Sigmoid colon (tissue), 7 donors: ENCODE measurements at regions of chr20 and their contacts with region 1.

Region 1: DNA sequence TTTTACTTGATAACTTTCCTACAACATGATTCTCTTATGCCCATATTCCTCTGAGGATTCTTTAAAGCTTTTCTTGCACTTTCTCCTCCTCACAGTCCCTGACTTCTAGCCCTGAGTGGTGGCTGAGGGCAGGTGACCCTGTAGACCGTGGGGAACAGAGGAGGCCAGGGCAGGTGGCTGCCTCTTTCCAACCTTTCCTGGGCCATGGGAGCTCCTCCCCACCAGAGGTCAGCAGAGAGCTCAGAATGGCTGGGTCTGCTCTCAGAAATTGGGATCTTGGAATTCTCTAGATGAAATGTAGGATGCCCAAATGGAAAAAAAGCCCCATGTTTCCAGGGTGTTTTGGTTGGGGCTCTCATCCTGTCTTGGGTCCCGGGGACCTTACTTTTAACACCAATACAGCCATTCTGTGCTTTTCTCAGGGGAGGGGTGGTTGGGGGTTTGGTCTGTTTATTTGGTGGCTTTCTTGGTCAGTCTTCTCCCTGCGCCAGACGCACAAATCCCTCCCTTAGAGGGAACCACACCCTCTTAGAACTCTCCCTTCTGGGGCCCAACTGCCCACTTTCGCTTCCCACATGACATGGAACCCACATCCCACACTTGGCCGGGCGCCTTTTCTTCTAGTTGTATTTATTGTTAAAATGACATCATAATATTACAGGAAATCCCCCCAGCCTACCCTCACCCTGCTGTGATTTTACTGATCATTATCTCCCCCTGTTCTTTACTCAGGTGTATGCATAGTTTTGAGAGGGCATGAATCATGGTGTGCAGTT is 17.9 kb downstream of the GNAS start:
- DNase-seq: peak; percentile 84
- H3K4me3 ChIP-seq: no peak overlapping the region
- H3K27ac ChIP-seq: no peak overlapping the region
- H3K4me1 ChIP-seq: no peaks in the 10 kb centered on the region
- H3K27me3 ChIP-seq: no peaks in the 10 kb centered on the region
- CTCF ChIP-seq: peak; percentile 71 to 88 (median 83)
- EP300 ChIP-seq: no peak
- POLR2A ChIP-seq: no peak

Region 2: GRCh38 chr20:59082077-59082740 is 211.8 kb after region 1 on chr20:
- intact Hi-C with region 1: loop called (anchors 5 kb)
- DNase-seq: no peak
- H3K4me3 ChIP-seq: no peak overlapping the region
- H3K27ac ChIP-seq: no peak overlapping the region
- H3K4me1 ChIP-seq: peaks cover 0 to 4% (median 2%) of the 10 kb centered on the region in 4 donors
- H3K27me3 ChIP-seq: peaks cover 0 to 4% (median 0%) of the 10 kb centered on the region in 3 donors
- CTCF ChIP-seq: peak in 1 of 4 experiments; percentile 11
- EP300 ChIP-seq: no peak
- POLR2A ChIP-seq: no peak

Region 3: DNA sequence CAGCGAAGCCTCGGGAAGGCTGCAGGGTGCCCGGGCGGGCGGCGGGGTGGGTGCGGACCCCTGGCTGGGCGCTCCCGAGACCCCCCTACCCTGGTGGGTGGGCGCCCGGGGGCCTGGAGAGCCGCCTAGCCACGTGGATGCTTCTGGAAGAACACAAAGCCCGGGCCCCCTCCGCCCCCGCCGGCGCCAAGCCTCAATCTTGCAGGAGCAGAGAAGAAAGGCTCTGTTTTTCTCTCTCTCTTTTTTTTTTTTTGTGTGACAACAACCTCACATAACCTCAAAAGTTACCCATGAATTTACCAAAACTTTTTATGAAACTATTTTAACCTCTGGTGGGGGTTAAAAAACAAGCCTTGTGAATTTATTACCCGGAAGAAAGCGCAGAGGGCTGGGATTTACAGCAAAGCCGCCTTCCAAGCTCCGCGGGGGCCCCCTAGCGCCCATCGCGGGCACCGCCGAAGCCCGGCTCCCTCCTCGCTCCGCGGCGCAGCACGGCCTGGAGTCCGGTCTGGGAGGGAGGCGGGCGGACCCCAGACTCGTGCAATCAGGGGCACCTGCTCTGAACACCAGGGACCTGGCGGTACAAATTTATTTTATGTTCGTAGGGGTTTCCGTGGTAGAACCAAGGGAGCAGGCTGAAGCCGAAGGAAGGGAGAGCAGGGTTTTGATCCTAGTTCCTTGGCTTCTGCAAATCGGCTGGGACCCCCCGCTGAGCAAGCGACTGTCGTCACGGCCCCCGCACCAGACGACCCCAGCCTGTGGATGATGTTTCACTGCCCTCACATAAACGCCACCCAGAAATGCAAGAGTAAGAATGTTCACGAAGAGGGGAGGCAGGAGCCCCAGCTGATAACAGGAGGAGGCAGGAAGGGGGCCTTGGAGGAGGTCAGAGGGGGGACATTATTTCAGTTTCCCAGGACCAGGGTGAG is 352.1 kb after region 1 on chr20:
- intact Hi-C with region 1: loop called (anchors 1 kb)
- DNase-seq: peak; percentile 86
- H3K4me3 ChIP-seq: peak overlapping the region; percentile 45 to 69 (median 58)
- H3K27ac ChIP-seq: peak overlapping the region; percentile 38 to 65 (median 48)
- H3K4me1 ChIP-seq: peaks cover 0 to 24% (median 9%) of the 10 kb centered on the region in 4 donors
- H3K27me3 ChIP-seq: peaks cover 0 to 28% (median 4%) of the 10 kb centered on the region in 3 donors
- CTCF ChIP-seq: peak; percentile 55 to 93 (median 77)
- EP300 ChIP-seq: no peak
- POLR2A ChIP-seq: no peak

Region 4: GRCh38 chr20:59403261-59403961 is 533.0 kb after region 1 on chr20:
- intact Hi-C with region 1: loop called (anchors 2 kb)
- DNase-seq: no peak
- H3K4me3 ChIP-seq: peak overlapping the region in 2 of 4 donors; percentile 4 to 8
- H3K27ac ChIP-seq: no peak overlapping the region
- H3K4me1 ChIP-seq: peaks cover 0 to 16% (median 13%) of the 10 kb centered on the region in 4 donors
- H3K27me3 ChIP-seq: peaks cover 8 to 83% (median 29%) of the 10 kb centered on the region in 3 donors
- CTCF ChIP-seq: peak; percentile 52 to 85 (median 84)
- EP300 ChIP-seq: no peak
- POLR2A ChIP-seq: no peak

Region 5: DNA sequence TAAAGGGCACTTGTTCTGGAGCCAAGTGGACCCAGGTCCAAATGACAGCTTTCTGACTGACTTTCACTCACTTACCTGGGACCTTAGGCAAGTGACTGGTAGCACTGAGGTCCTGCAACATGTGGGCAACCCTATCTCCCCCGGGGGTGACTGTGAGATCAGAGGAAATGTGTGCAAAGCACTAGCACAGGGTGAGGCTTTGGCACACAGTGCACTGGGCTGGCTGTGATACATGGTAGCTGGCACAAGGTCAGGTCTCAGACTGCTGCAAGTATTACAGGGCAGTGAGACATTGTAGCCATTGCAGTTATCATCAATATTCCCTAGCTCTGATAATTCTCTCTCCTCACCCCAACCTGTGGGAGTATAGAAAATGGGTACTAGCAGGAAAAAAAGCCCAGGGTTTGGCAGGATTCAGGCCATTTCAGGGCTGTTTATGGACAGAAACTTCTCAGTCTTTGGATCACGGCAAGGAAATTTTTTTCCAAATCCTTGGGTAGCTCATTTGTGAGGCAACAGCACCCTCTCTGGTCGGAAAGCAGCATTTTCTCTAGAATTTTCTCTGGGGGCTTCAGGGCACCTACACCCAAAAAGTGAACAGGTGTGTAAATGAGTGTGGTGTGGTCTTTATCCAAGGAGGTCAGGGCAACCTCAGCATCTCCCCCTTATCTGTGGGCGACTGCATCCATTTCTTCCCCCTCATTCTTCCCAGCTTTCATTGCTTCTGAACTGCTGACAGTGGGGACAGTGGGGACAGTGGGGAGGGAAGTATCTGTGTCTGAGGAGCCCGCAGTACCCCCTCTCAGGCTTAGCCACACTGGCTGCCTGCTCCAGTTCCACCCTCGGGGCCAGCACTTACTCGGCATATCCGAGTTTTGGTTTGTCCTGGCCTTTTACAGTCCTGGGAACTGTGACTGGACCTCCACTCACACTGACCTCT is 585.2 kb after region 1 on chr20:
- intact Hi-C with region 1: loop called (anchors 2 kb)
- DNase-seq: peak; percentile 52
- H3K4me3 ChIP-seq: peak overlapping the region in 1 of 4 donors; percentile 12
- H3K27ac ChIP-seq: no peak overlapping the region
- H3K4me1 ChIP-seq: peaks cover 0 to 5% (median 1%) of the 10 kb centered on the region in 4 donors
- H3K27me3 ChIP-seq: peaks cover 0 to 3% (median 0%) of the 10 kb centered on the region in 3 donors
- CTCF ChIP-seq: peak in 3 of 4 experiments; percentile 49 to 62 (median 61)
- EP300 ChIP-seq: no peak
- POLR2A ChIP-seq: no peak